CD4-positive, alpha-beta memory T cell (primary cell): ENCODE measurements at regions of chrX and their contacts with region 1.

Region 1: DNA sequence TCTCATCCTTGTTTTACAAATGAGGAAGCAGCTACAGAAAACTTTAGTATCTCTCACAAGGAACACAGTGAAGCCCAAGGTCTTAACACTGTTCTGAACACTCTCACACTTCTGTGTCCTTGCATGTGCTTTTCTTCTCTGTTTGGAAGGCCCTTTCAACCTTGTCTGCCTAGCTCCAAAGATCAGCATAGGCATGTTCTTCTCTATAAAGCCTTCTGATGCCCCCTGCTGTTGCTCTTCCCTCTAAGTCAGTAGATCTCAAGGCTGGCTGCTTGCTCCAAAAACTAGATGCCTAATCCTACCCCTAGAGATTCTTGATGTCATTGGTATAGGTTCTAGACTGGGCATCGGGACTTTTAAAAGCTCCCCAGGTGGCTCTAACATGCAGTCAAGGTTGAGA is 5.9 kb downstream of the APOO start:
- DNase-seq: peak in 4 of 5 donors; percentile 26 to 51 (median 44)
- H3K4me3 ChIP-seq: no peak overlapping the region
- H3K4me3 Mint-ChIP-seq: no peak overlapping the region
- H3K27ac ChIP-seq: no peak overlapping the region
- H3K27ac Mint-ChIP-seq: no peak overlapping the region
- H3K4me1 ChIP-seq: peaks cover 21% of the 10 kb centered on the region
- H3K4me1 Mint-ChIP-seq: peaks cover 2 to 9% (median 5%) of the 10 kb centered on the region in 4 donors
- H3K27me3 ChIP-seq: no peaks in the 10 kb centered on the region
- H3K27me3 Mint-ChIP-seq: no peaks in the 10 kb centered on the region

Region 2: DNA sequence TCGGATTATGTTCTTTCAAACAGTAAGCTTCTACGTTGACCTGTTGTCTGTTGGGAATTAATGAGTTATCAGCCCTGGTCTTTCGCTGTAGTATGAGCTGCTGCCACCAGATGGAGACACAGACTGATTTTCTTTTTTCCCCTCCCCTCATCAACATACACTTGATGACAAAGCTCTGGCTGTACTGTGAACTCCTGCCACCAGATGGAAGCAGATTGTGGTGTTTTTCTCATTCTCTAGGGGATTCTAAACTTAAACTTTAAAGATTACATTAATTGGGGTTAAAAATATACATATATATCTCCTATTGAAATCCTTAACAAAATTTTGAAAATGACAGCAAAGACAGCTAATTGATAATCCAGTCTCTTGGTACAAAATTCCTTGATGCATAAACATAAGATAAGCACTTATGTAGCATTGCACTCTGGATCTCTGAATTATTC is 1916.5 kb before region 1 on chrX:
- CTCF ChIA-PET with region 1: no interaction called
- POLR2A ChIA-PET with region 1: no interaction called
- intact Hi-C with region 1: loop called (anchors 1 kb)
- DNase-seq: peak; percentile 61 to 75 (median 74)
- H3K4me3 ChIP-seq: no peak overlapping the region
- H3K4me3 Mint-ChIP-seq: no peak overlapping the region
- H3K27ac ChIP-seq: no peak overlapping the region
- H3K27ac Mint-ChIP-seq: peak overlapping the region in 2 of 7 donors; percentile 5 to 8
- H3K4me1 ChIP-seq: no peaks in the 10 kb centered on the region
- H3K4me1 Mint-ChIP-seq: peaks cover 2 to 5% (median 3%) of the 10 kb centered on the region in 4 donors
- H3K27me3 ChIP-seq: no peaks in the 10 kb centered on the region
- H3K27me3 Mint-ChIP-seq: no peaks in the 10 kb centered on the region

Region 3: GRCh38 chrX:22081475-22082092 is 1820.2 kb before region 1 on chrX:
- CTCF ChIA-PET with region 1: no interaction called
- POLR2A ChIA-PET with region 1: no interaction called
- intact Hi-C with region 1: loop called (anchors 5 kb)
- DNase-seq: peak in 4 of 5 donors; percentile 19 to 28 (median 25)
- H3K4me3 ChIP-seq: no peak overlapping the region
- H3K4me3 Mint-ChIP-seq: no peak overlapping the region
- H3K27ac ChIP-seq: no peak overlapping the region
- H3K27ac Mint-ChIP-seq: no peak overlapping the region
- H3K4me1 ChIP-seq: no peaks in the 10 kb centered on the region
- H3K4me1 Mint-ChIP-seq: peaks cover 0 to 4% (median 0%) of the 10 kb centered on the region in 4 donors
- H3K27me3 ChIP-seq: no peaks in the 10 kb centered on the region
- H3K27me3 Mint-ChIP-seq: no peaks in the 10 kb centered on the region

Region 4: GRCh38 chrX:23667239-23668177 is 234.3 kb before region 1 on chrX and contains the start of gene PRDX4:
- CTCF ChIA-PET with region 1: interaction called, 10 read pairs
- POLR2A ChIA-PET with region 1: interaction called, 14 read pairs
- intact Hi-C with region 1: loop called (anchors 1 kb)
- DNase-seq: peak; percentile 60 to 75 (median 67)
- H3K4me3 ChIP-seq: peak within 1 kb of the TSS in 1 of 2 donors; percentile 52
- H3K4me3 Mint-ChIP-seq: peak within 1 kb of the TSS; percentile 86 to 94 (median 88)
- H3K27ac ChIP-seq: peak within 1 kb of the TSS; percentile 85
- H3K27ac Mint-ChIP-seq: peak within 1 kb of the TSS; percentile 85 to 94 (median 91)
- H3K4me1 ChIP-seq: peaks cover 17% of the 10 kb centered on the region
- H3K4me1 Mint-ChIP-seq: peaks cover 14 to 29% (median 17%) of the 10 kb centered on the region in 4 donors
- H3K27me3 ChIP-seq: no peaks in the 10 kb centered on the region
- H3K27me3 Mint-ChIP-seq: no peaks in the 10 kb centered on the region
- total RNA-seq, gene PRDX4: 13.1 to 13.4 TPM

Region 5: GRCh38 chrX:23694606-23695005 is 207.2 kb before region 1 on chrX:
- CTCF ChIA-PET with region 1: interaction called, 93 read pairs
- POLR2A ChIA-PET with region 1: interaction called, 7 read pairs
- intact Hi-C with region 1: loop called (anchors 1 kb)
- DNase-seq: peak; percentile 17 to 38 (median 34)
- H3K4me3 ChIP-seq: no peak overlapping the region
- H3K4me3 Mint-ChIP-seq: no peak overlapping the region
- H3K27ac ChIP-seq: no peak overlapping the region
- H3K27ac Mint-ChIP-seq: no peak overlapping the region
- H3K4me1 ChIP-seq: no peaks in the 10 kb centered on the region
- H3K4me1 Mint-ChIP-seq: peaks cover 0 to 1% (median 0%) of the 10 kb centered on the region in 4 donors
- H3K27me3 ChIP-seq: no peaks in the 10 kb centered on the region
- H3K27me3 Mint-ChIP-seq: no peaks in the 10 kb centered on the region

Region 6: DNA sequence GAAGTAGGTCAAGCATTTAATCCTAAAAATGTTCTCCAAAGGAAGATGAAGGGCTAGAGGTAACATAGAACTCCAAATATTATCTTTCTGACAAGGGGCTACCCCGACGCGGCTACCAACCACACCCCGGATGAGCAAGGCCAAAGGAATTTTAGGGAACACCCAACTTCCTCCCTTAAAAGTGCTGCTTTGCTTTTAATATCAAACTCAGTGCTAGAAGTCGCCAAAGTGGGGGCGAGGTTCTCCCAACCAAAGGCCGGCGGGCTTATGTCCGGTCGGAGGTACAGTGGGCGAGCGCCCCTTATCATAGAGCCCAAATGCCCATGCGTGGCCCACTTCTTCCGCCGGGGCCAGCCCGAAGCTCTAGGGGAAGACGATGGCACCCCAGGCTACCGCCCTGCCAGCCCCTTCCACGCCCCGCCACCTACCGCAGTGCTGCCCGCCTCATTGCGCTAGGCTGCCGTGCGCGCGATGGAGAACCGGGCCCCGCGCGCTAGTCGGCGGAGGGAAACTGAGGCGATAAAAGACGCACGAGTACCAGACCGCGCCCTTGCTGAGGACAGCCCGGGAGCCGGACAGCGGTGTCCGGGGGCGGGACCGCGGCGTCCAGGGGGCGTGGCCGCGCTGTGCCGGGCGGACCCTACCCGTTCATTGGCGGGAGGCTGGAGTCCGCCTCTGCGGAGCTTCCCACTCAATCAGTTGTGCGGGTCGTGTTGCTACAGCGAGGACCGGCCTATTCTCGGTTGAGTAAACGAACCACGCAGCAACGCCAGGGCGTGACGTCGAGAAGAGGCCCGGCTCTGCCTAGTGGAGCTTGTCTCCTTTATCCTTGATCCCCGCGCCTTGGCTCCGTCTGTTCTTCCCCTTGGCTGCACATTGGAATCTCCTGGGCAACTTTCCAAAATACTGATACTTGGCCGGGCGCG is 158.8 kb before region 1 on chrX and contains the start of gene ACOT9:
- CTCF ChIA-PET with region 1: interaction called, 13 read pairs
- POLR2A ChIA-PET with region 1: interaction called, 11 read pairs
- intact Hi-C with region 1: no loop called
- DNase-seq: peak; percentile 69 to 80 (median 76)
- H3K4me3 ChIP-seq: peak within 1 kb of the TSS; percentile 45 to 77
- H3K4me3 Mint-ChIP-seq: peak within 1 kb of the TSS; percentile 87 to 94 (median 90)
- H3K27ac ChIP-seq: peak within 1 kb of the TSS; percentile 58
- H3K27ac Mint-ChIP-seq: peak within 1 kb of the TSS; percentile 64 to 96 (median 91)
- H3K4me1 ChIP-seq: peaks cover 35% of the 10 kb centered on the region
- H3K4me1 Mint-ChIP-seq: peaks cover 11 to 42% (median 28%) of the 10 kb centered on the region in 4 donors
- H3K27me3 ChIP-seq: no peaks in the 10 kb centered on the region
- H3K27me3 Mint-ChIP-seq: no peaks in the 10 kb centered on the region
- total RNA-seq, gene ACOT9: 21.2 to 25.2 TPM

Region 7: GRCh38 chrX:23756157-23756559 is 145.6 kb before region 1 on chrX:
- CTCF ChIA-PET with region 1: interaction called, 17 read pairs
- POLR2A ChIA-PET with region 1: no interaction called
- intact Hi-C with region 1: loop called (anchors 1 kb)
- DNase-seq: peak; percentile 53 to 64 (median 56)
- H3K4me3 ChIP-seq: no peak overlapping the region
- H3K4me3 Mint-ChIP-seq: peak overlapping the region in 3 of 8 donors; percentile 22 to 57 (median 31)
- H3K27ac ChIP-seq: no peak overlapping the region
- H3K27ac Mint-ChIP-seq: peak overlapping the region in 3 of 7 donors; percentile 30 to 71 (median 42)
- H3K4me1 ChIP-seq: no peaks in the 10 kb centered on the region
- H3K4me1 Mint-ChIP-seq: peaks cover 0 to 4% (median 3%) of the 10 kb centered on the region in 4 donors
- H3K27me3 ChIP-seq: no peaks in the 10 kb centered on the region
- H3K27me3 Mint-ChIP-seq: no peaks in the 10 kb centered on the region